ENCODE measurements at regions of chr4 and their contacts with region 1.

Region 1: GRCh38 chr4:22122062-22122461 is 173.5 kb upstream of the KCNIP4 start:
- DNase-seq: no peak
- ATAC-seq: no peak
- H3K4me3 ChIP-seq: no peak overlapping the region
- H3K27ac ChIP-seq: no peak overlapping the region
- H3K4me1 ChIP-seq: no peaks in the 10 kb centered on the region
- H3K27me3 ChIP-seq: no peaks in the 10 kb centered on the region
- CTCF ChIP-seq: no peak

Region 2: DNA sequence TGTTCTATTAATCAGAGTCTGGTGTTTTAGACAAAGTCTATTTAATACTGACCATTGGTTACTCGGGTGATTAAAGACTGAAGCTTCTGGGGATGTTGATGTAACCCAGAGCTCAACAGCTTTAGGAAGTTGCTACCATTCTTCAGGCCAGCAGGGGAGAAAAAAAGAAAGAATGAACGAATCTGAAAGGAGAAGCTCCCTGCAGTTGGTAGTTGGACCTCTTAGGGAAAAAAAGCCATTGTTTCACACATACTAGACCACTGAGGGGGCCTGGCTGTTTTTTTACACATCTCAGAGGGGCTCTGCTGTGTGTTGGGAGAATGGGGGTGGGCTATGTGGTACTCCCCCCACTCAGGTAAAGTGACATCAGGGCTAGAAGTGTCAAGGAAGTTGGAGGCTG is 552.4 kb before region 1 on chr4:
- intact Hi-C with region 1: no loop called
- DNase-seq: no peak
- ATAC-seq: no peak
- H3K4me3 ChIP-seq: no peak overlapping the region
- H3K27ac ChIP-seq: no peak overlapping the region
- H3K4me1 ChIP-seq: no peaks in the 10 kb centered on the region
- H3K27me3 ChIP-seq: no peaks in the 10 kb centered on the region
- CTCF ChIP-seq: no peak

Region 3: GRCh38 chr4:21954916-21955315 is 167.1 kb before region 1 on chr4:
- intact Hi-C with region 1: no loop called
- DNase-seq: no peak
- ATAC-seq: no peak
- H3K4me3 ChIP-seq: no peak overlapping the region
- H3K27ac ChIP-seq: no peak overlapping the region
- H3K4me1 ChIP-seq: no peaks in the 10 kb centered on the region
- H3K27me3 ChIP-seq: peaks cover 0 to 4% (median under 1%) of the 10 kb centered on the region in 7 donors
- CTCF ChIP-seq: no peak

Region 4: DNA sequence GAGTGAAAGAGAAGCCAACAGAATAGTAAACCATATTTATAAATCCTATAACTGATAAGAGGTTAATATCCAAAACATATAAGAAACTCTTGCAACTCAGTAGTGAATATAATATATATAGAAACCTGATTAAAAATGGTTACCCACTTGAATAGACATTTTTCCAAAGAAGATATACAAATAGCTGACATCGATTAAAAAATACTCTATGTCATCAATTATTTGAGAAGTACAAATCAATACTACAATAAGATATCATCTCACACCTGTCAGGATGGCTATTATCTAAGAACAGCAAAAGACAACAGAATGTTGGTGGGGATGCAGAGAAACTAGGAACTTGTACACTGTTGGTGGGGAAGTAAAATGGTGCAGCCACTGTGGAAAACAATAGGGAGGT is 1513.4 kb after region 1 on chr4:
- intact Hi-C with region 1: loop called in 1 of 10 experiments (anchors 5 kb)
- DNase-seq: no peak
- ATAC-seq: no peak
- H3K4me3 ChIP-seq: no peak overlapping the region
- H3K27ac ChIP-seq: no peak overlapping the region
- H3K4me1 ChIP-seq: no peaks in the 10 kb centered on the region
- H3K27me3 ChIP-seq: no peaks in the 10 kb centered on the region
- CTCF ChIP-seq: no peak

Measured in heart right ventricle (tissue), 16 donors.